Activated B cell treated with CpG ODN at 0.5 μM for 24 hours (primary cell): ENCODE measurements at regions of chrX and their contacts with region 1.

Region 1: GRCh38 chrX:45801554-45801953 is 600.9 kb upstream of the DIPK2B start:
- DNase-seq: no peak
- ATAC-seq: peak; percentile 50
- H3K4me3 Mint-ChIP-seq: no peak overlapping the region
- H3K27ac Mint-ChIP-seq: no peak overlapping the region
- H3K4me1 Mint-ChIP-seq: peaks cover 13% of the 10 kb centered on the region
- H3K27me3 Mint-ChIP-seq: no peaks in the 10 kb centered on the region
- CTCF ChIP-seq: no peak

Region 2: GRCh38 chrX:45769761-45770582 is 31.6 kb before region 1 on chrX:
- CTCF ChIA-PET with region 1: no interaction called
- POLR2A ChIA-PET with region 1: interaction called, 12 read pairs
- intact Hi-C with region 1: loop called (anchors 1 kb)
- DNase-seq: peak; percentile 28
- ATAC-seq: peak; percentile 76
- H3K4me3 Mint-ChIP-seq: peak overlapping the region; percentile 90
- H3K27ac Mint-ChIP-seq: peak overlapping the region; percentile 91
- H3K4me1 Mint-ChIP-seq: peaks cover 52% of the 10 kb centered on the region
- H3K27me3 Mint-ChIP-seq: no peaks in the 10 kb centered on the region
- CTCF ChIP-seq: no peak

Region 3: GRCh38 chrX:45824471-45824870 is 22.9 kb after region 1 on chrX:
- CTCF ChIA-PET with region 1: no interaction called
- POLR2A ChIA-PET with region 1: no interaction called
- intact Hi-C with region 1: no loop called
- DNase-seq: no peak
- ATAC-seq: no peak
- H3K4me3 Mint-ChIP-seq: no peak overlapping the region
- H3K27ac Mint-ChIP-seq: no peak overlapping the region
- H3K4me1 Mint-ChIP-seq: peaks cover 2% of the 10 kb centered on the region
- H3K27me3 Mint-ChIP-seq: no peaks in the 10 kb centered on the region
- CTCF ChIP-seq: no peak

Region 4: GRCh38 chrX:45843518-45843917 is 42.0 kb after region 1 on chrX:
- CTCF ChIA-PET with region 1: interaction called, 4 read pairs
- POLR2A ChIA-PET with region 1: no interaction called
- intact Hi-C with region 1: loop called (anchors 5 kb)
- DNase-seq: no peak
- ATAC-seq: no peak
- H3K4me3 Mint-ChIP-seq: no peak overlapping the region
- H3K27ac Mint-ChIP-seq: no peak overlapping the region
- H3K4me1 Mint-ChIP-seq: no peaks in the 10 kb centered on the region
- H3K27me3 Mint-ChIP-seq: no peaks in the 10 kb centered on the region
- CTCF ChIP-seq: no peak